Cardiac septum (tissue), 1 donor: ENCODE measurements at regions of chr2 and their contacts with region 1.

Region 1: DNA sequence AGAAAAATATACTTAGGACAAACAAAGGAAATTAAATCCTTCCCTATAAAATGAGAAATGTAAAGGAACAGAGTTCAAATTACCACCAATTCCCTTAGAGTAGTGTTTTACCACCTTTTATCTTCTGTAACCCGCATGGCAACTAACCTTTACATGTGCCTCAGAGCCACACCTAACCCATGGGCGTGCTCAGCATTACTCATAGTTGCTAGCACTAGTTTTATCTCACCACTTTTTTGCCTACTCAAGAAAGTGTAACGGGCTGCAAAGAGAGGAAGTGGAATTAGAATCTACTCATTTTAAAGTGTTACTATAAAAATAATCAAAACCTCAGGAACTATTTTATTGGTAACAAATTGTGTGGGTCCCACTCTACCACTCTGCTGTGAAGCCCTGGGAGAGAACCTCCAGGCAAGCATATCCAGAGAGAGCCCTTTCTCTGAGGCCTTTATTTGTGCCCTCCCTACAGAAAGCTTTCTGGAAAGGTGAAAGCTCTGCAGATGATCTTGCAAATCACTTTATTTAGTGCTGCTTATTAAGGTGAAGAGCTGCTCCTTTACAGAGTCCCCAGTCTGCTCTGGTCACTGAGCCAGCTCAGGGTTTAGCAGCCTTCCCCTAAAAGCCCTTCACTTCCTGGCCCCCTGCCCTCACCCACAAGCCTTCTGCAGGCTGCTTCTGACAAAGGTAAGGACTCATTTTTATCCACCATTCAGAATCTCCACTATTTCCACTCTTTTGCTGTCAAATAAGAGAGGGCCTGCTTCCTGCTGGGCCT is 98.8 kb downstream of the TRABD2A start:
- DNase-seq: no peak

Region 2: GRCh38 chr2:84649487-84650142 is 132.5 kb before region 1 on chr2:
- intact Hi-C with region 1: loop called (anchors 10 kb)
- DNase-seq: no peak

Region 3: DNA sequence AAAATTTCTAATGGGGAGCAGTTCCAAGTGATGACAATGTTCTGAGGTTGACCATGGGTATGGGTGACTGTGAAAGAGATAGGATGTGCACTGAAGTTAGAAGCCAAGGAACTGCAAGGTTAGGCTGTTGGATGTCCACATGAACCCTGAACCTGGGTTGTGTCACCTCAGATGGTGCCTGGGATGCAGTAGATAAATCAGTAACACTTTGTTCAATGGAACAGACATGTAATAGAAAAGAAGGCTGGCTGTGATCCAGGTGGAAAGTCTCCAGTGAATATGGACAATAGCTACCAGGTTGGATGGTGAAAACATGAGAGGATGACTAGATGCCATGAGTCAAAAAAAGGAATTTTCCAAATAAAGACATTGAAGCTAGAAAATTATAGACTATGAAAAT is 32.7 kb before region 1 on chr2:
- intact Hi-C with region 1: no loop called
- DNase-seq: no peak

Region 4: DNA sequence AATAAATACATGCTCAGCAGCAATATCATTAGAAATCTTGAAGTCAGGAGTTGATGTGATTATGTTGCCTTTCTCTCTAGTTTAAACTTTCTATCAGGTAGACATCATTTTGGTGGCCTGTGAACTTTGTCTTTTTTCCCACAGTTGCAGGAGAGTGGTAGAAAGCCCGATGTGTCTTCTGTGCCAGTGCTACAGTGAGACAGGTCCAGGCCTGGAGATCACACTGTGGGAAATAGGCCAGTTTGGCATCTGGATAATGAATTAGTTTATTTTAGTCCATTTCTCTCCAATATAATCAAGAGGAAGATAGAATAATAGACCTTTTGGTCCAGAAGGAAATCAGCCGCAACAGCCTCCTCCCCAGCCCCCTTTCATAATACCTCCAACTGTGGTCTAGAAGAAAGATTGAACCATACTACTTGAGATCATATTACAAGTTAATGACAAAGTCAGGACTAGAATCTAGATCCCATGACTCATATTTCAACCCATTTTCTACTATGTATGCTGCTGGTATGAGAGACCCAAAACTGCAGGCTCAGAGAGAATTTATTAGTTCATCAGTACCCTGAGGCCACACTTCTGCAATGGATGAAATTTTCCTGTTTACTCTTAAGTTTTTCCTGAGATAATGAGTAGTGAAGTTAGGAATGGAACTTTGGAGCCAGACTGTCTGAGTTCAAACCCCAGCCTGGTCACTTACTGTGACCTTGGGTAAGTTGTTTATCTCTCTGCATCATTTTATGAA is 209.4 kb after region 1 on chr2:
- intact Hi-C with region 1: no loop called
- DNase-seq: no peak